SK-N-SH (cell line): ENCODE measurements at regions of chr12 and their contacts with region 1.

Region 1: GRCh38 chr12:68223083-68223747 is 2.4 kb downstream of the IL26 start:
- DNase-seq: peak; percentile 61
- H3K4me3 ChIP-seq: peak overlapping the region in 1 of 2 experiments; percentile 35; a peak in 1 of 4 replicates
- H3K27ac ChIP-seq: peak overlapping the region; percentile 5 to 22; a peak in 2 of 4 replicates
- H3K4me1 ChIP-seq: peaks cover 6 to 10% of the 10 kb centered on the region in 2 experiments; a peak in 3 of 4 replicates
- H3K27me3 ChIP-seq: 0 out of 2 replicates have a peak, but pooled peaks cover 4% of the 10 kb centered on the region
- CTCF ChIP-seq: peak; percentile 87
- EP300 ChIP-seq: no peak
- RAD21 ChIP-seq: peak; percentile 98

Region 2: GRCh38 chr12:68040450-68041075 is 182.7 kb before region 1 on chr12:
- CTCF ChIA-PET with region 1: interaction called, 17 read pairs
- POLR2A ChIA-PET with region 1: no interaction called
- DNase-seq: peak; percentile 72
- H3K4me3 ChIP-seq: no peak overlapping the region; a peak in 1 of 4 replicates
- H3K27ac ChIP-seq: no peak overlapping the region
- H3K4me1 ChIP-seq: no peaks in the 10 kb centered on the region; a peak in 1 of 4 replicates
- H3K27me3 ChIP-seq: no peaks in the 10 kb centered on the region
- CTCF ChIP-seq: peak; percentile 97
- EP300 ChIP-seq: no peak
- RAD21 ChIP-seq: peak; percentile 91

Region 3: DNA sequence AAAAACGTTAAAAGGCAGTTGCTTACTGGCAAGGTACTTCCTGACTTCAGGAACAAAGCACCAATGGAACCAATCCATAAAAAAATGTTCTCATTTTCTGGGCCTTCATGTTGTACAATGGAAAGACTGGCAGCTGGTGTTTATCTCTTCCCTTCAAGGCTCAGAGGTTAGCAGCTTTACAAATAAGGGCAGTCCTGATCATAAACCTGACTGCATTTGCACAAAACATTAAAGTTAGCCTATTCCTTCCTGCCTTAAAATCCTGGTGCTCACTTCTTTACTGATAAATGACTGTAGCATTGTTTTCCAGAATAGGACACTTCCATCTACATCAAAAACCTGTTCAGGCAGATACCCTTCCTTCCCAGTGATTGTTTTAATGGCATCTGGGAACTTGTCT is 16.8 kb before region 1 on chr12:
- CTCF ChIA-PET with region 1: interaction called, 21 read pairs
- POLR2A ChIA-PET with region 1: no interaction called
- DNase-seq: no peak
- H3K4me3 ChIP-seq: no peak overlapping the region
- H3K27ac ChIP-seq: no peak overlapping the region
- H3K4me1 ChIP-seq: peaks cover 0 to 4% of the 10 kb centered on the region in 2 experiments; a peak in 3 of 4 replicates
- H3K27me3 ChIP-seq: peaks cover 4% of the 10 kb centered on the region; the same call in 1 of the 2 replicates
- CTCF ChIP-seq: no peak
- EP300 ChIP-seq: no peak
- RAD21 ChIP-seq: no peak

Region 4: GRCh38 chr12:68236421-68237059 is 13.3 kb after region 1 on chr12:
- CTCF ChIA-PET with region 1: interaction called, 18 read pairs
- POLR2A ChIA-PET with region 1: no interaction called
- DNase-seq: no peak
- H3K4me3 ChIP-seq: no peak overlapping the region
- H3K27ac ChIP-seq: no peak overlapping the region
- H3K4me1 ChIP-seq: peaks cover 4 to 24% of the 10 kb centered on the region in 2 experiments; a peak in 3 of 4 replicates
- H3K27me3 ChIP-seq: no peaks in the 10 kb centered on the region
- CTCF ChIP-seq: no peak
- EP300 ChIP-seq: no peak
- RAD21 ChIP-seq: no peak

Region 5: DNA sequence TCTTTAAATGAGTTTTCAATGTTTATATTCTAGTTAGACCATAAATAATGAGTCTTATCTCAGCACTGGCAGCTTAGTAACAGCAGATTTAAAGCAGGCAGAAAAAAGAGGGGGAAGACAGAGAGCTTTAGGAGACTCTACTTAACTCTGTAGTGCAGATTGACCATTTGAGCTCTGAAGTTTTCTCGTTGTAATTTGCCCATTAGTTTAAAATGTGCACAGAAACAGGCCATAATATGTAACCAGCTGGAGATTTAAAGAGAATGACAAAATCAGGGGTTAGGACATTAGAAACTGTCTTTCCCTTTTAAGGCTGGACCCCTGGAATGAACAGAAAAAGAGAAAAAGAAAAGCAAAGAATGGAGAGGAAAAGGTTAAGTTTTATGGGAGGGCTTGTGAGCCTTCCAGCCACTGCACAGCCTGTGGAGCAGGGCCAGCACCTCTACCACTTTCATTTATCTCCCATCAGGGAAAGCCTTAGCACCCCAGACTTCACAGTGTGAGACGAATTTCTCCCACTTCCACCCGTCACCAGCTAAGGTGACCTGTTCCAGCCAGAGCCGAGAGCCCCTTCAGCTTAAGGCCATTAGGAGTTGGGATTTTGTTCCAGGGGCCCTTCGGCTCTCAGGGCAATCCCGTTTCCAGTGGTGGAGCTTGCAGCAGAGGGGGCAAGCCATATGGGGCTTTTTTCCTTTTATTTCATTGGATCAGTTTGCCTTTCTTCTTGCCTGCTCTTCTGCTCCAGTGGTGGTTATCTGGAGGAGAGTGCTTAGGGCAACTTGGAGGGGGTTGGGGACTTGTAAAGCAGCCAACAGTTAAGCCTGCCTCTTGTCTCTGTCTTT is 22.2 kb after region 1 on chr12:
- CTCF ChIA-PET with region 1: interaction called, 14 read pairs
- POLR2A ChIA-PET with region 1: interaction called, 4 read pairs
- DNase-seq: peak; percentile 27
- H3K4me3 ChIP-seq: peak overlapping the region; percentile 14 to 26; a peak in 1 of 4 replicates
- H3K27ac ChIP-seq: peak overlapping the region; percentile 32 to 91; a peak in 3 of 4 replicates
- H3K4me1 ChIP-seq: peaks cover 9 to 23% of the 10 kb centered on the region in 2 experiments
- H3K27me3 ChIP-seq: no peaks in the 10 kb centered on the region
- CTCF ChIP-seq: no peak
- EP300 ChIP-seq: no peak
- RAD21 ChIP-seq: no peak

Region 6: DNA sequence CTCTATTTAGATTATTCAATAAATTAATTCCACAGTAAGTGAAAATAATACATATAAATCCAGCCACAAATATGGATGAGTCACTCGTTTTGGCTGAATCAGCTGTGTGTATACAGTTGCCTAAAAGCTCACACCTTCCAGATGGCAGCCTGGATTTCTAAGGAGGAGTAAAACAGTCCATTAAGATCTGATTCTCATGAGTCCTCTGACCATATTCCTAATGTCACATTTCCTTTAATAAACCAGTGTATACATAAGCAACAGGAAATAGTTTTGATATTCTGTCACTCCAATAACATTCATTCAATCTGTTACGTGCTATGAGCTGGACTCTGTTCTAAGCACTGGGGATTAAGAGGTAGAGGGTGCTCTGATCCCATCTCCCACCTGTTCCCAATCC is 87.2 kb after region 1 on chr12:
- CTCF ChIA-PET with region 1: interaction called, 82 read pairs
- POLR2A ChIA-PET with region 1: no interaction called
- DNase-seq: no peak
- H3K4me3 ChIP-seq: no peak overlapping the region
- H3K27ac ChIP-seq: peak overlapping the region in 1 of 2 experiments; percentile 68; a peak in 2 of 4 replicates
- H3K4me1 ChIP-seq: peaks cover 0 to 5% of the 10 kb centered on the region in 2 experiments; a peak in 1 of 4 replicates
- H3K27me3 ChIP-seq: no peaks in the 10 kb centered on the region
- CTCF ChIP-seq: no peak
- EP300 ChIP-seq: no peak
- RAD21 ChIP-seq: no peak